MCF 10A (cell line): ENCODE measurements at regions of chr6 and their contacts with region 1.

Region 1: DNA sequence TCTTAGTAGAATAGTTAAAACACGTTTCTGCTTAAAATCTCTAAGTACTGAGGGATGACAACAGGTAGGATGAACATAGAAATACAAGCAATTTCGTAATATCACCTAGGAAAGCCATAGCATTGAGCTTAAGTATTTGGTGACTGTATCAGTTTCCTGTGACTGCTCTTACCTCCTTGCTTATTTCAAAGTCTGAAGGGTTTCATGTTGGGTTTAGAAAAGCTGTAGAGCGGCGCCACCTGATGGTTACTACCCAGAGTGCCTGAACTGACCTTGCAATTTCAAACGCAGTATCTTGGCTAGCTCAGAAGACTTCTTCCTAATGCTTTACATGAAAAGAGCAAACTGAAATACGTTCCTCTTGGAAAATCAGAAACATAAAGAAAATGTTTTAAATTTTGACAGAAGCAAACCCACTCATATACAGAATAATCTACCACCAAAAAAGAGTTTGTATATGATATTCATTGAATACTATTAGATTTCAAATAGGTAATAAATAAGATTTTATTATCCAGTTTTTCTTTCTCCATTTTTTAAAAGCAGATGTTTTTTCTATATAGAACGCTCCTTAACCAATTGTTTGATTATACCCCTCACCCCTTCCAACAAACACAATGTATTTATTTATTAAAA is 82.3 kb upstream of the RIPOR2 start:
- DNase-seq: peak; percentile 88
- H3K4me3 Mint-ChIP-seq: peak overlapping the region; percentile 22
- H3K27ac Mint-ChIP-seq: peak overlapping the region; percentile 62
- H3K4me1 Mint-ChIP-seq: peaks cover 38% of the 10 kb centered on the region
- H3K27me3 Mint-ChIP-seq: no peaks in the 10 kb centered on the region
- CTCF ChIP-seq: peak; percentile 87

Region 2: GRCh38 chr6:24720604-24721460 is 297.2 kb before region 1 on chr6:
- CTCF ChIA-PET with region 1: no interaction called
- POLR2A ChIA-PET with region 1: interaction called, 4 read pairs
- intact Hi-C with region 1: loop called (anchors 2 kb)
- DNase-seq: peak; percentile 100
- H3K4me3 Mint-ChIP-seq: peak overlapping the region; percentile 82
- H3K27ac Mint-ChIP-seq: peak overlapping the region; percentile 100
- H3K4me1 Mint-ChIP-seq: peaks cover 7% of the 10 kb centered on the region
- H3K27me3 Mint-ChIP-seq: no peaks in the 10 kb centered on the region
- CTCF ChIP-seq: no peak

Region 3: GRCh38 chr6:24855395-24856245 is 162.4 kb before region 1 on chr6:
- CTCF ChIA-PET with region 1: interaction called, 158 read pairs
- POLR2A ChIA-PET with region 1: interaction called, 159 read pairs
- intact Hi-C with region 1: loop called (anchors 1 kb)
- DNase-seq: peak; percentile 76
- H3K4me3 Mint-ChIP-seq: no peak overlapping the region
- H3K27ac Mint-ChIP-seq: peak overlapping the region; percentile 39
- H3K4me1 Mint-ChIP-seq: peaks cover 28% of the 10 kb centered on the region
- H3K27me3 Mint-ChIP-seq: no peaks in the 10 kb centered on the region
- CTCF ChIP-seq: peak; percentile 84

Region 4: GRCh38 chr6:24911796-24912382 is 106.2 kb before region 1 on chr6:
- CTCF ChIA-PET with region 1: interaction called, 4 read pairs
- POLR2A ChIA-PET with region 1: interaction called, 6 read pairs
- intact Hi-C with region 1: loop called (anchors 2 kb)
- DNase-seq: no peak
- H3K4me3 Mint-ChIP-seq: peak overlapping the region; percentile 81
- H3K27ac Mint-ChIP-seq: no peak overlapping the region
- H3K4me1 Mint-ChIP-seq: peaks cover 28% of the 10 kb centered on the region
- H3K27me3 Mint-ChIP-seq: no peaks in the 10 kb centered on the region
- CTCF ChIP-seq: no peak

Region 5: DNA sequence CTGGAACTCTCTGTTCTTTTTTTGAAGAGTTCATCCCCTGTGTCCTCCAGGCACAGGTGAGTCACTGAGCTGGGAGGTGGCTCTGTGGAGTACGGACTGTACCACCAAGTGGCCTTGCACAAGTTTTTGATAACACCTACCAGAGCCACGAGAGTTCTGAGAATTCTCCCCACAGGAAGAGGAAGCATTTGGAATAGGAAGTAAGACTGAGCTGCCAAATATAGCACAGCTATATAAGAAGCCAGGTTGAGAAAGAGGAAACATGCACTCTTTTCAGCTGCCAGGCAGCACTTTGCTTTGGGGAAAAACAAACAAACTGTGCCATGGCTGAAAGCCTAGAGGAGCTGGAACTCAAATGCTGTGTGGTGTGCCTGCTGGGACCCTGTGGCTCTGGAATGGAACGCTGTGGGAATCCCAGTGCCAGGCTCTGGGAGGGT is 11.5 kb before region 1 on chr6:
- CTCF ChIA-PET with region 1: interaction called, 36 read pairs
- POLR2A ChIA-PET with region 1: interaction called, 172 read pairs
- intact Hi-C with region 1: no loop called
- DNase-seq: peak; percentile 97
- H3K4me3 Mint-ChIP-seq: peak overlapping the region; percentile 12
- H3K27ac Mint-ChIP-seq: peak overlapping the region; percentile 78
- H3K4me1 Mint-ChIP-seq: peaks cover 60% of the 10 kb centered on the region
- H3K27me3 Mint-ChIP-seq: no peaks in the 10 kb centered on the region
- CTCF ChIP-seq: no peak